ENCODE measurements at regions of chr17 and their contacts with region 1.

Region 1: DNA sequence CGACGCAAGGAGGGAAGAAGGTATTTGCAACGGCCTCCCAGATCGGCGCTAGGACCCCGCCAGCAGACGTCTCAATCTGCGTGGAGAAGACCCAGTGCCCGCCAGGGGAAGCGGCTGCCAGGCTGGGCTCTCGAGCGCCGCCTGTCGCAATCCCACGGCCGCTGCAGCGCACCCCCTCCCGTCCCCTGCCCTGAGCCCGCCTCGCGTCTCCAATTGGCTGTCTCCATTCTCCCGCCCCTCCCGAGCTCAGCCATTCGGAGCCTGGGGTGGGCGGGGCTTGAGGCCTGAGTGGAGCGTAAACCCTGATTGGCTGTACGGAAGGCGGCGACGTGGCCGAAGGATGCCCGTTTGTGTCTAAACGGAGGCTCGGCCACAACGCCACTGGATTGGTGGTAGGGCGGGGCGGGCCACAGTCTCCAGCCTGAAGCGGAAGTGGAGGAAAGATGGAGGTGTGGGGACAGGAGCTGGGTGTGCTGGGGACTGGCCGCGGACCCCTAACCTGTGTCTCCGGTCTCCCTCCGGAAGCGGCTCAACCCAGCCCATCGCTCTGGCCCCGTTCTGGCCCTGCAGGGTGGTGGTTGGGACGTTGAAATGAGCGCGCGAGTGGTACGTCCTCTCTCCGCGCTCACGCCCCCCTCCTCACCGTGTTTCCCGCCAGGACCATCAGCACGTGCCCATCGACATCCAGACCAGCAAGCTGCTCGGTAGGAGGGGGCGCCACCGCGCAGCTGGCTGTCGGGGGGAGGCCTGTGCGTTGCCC is at the start of gene CDK5RAP3:
- DNase-seq: peak; percentile 100
- total RNA-seq, gene CDK5RAP3: 58.2 TPM

Region 2: GRCh38 chr17:47949136-47949759 is 21.6 kb before region 1 on chr17:
- intact Hi-C with region 1: loop called (anchors 2 kb)
- DNase-seq: peak; percentile 95